Ovary (tissue), 10 donors: ENCODE measurements at regions of chr17 and their contacts with region 1.

Region 1: GRCh38 chr17:59311130-59311920 is 20.1 kb upstream of the YPEL2 start:
- DNase-seq: peak in 1 of 5 donors; percentile 37
- H3K4me3 ChIP-seq: no peak overlapping the region
- H3K27ac ChIP-seq: no peak overlapping the region
- H3K4me1 ChIP-seq: no peaks in the 10 kb centered on the region
- H3K27me3 ChIP-seq: no peaks in the 10 kb centered on the region
- CTCF ChIP-seq: peak; percentile 44 to 83 (median 77)
- EP300 ChIP-seq: no peak
- POLR2A ChIP-seq: no peak

Region 2: GRCh38 chr17:59331129-59331928 is 20.0 kb after region 1 on chr17 and contains the start of gene YPEL2:
- intact Hi-C with region 1: no loop called
- DNase-seq: peak; percentile 95 to 98 (median 97)
- H3K4me3 ChIP-seq: peak within 1 kb of the TSS; percentile 96
- H3K27ac ChIP-seq: peak within 1 kb of the TSS; percentile 75 to 85
- H3K4me1 ChIP-seq: peaks cover 7% of the 10 kb centered on the region
- H3K27me3 ChIP-seq: no peaks in the 10 kb centered on the region
- CTCF ChIP-seq: no peak
- EP300 ChIP-seq: no peak
- POLR2A ChIP-seq: peak; percentile 39
- total RNA-seq, gene YPEL2: 6.6 to 28.1 (median 10.6) TPM

Region 3: DNA sequence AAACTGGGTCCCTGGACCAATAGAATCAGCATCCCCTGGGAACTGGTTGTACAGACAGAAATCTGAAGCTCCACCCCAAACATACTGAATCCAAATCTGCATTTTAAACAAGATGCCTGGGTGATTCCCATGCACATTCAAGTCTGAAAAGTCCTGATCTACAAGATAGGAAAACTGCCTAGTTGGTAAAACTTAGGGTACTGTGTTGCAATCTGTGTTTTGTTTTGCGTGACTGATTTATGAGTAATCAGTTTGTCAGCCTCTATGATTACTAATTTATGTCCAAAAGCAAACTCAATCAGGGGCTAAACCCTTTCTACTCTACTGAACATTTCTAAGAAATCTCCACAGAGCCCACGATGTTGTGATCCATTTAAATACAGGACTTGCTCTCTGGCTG is 123.9 kb after region 1 on chr17:
- intact Hi-C with region 1: loop called in 2 of 4 experiments (anchors 5 kb)
- DNase-seq: no peak
- H3K4me3 ChIP-seq: no peak overlapping the region
- H3K27ac ChIP-seq: no peak overlapping the region
- H3K4me1 ChIP-seq: peaks cover under 1% of the 10 kb centered on the region
- H3K27me3 ChIP-seq: no peaks in the 10 kb centered on the region
- CTCF ChIP-seq: no peak
- EP300 ChIP-seq: no peak
- POLR2A ChIP-seq: no peak

Region 4: DNA sequence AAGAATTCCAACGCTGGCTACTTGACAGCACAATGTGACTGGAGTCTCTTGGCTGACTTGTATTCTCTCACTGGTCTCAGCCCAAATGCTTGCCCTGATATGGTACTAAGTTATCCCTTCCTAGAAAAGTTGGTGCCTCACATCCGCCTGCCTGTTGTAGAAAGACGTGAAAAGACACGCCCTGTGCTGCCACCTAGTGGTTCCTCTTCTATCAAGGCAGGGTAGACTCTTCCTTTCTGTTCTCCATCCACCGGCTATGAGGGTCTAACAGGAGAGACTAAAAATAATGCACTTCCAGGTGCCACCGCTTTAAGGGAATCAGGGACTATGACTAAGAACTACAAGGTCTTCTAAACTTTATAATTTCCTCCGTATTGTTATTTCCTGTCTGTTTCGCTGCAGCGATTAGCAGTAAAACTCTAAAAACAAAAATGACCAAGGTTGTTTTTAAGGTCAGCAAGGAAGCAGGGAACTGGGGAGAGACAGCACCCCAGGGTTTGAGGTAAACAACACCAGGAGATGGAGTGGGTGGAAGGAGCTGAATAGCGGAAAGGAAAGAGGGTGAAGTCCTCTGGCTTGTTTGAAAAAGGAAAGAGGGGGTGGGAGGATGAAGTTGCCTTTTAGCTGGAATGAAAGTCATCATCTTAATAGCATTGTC is 129.6 kb after region 1 on chr17:
- intact Hi-C with region 1: loop called in 2 of 4 experiments (anchors 5 kb)
- DNase-seq: peak; percentile 84 to 94 (median 89)
- H3K4me3 ChIP-seq: no peak overlapping the region
- H3K27ac ChIP-seq: no peak overlapping the region
- H3K4me1 ChIP-seq: peaks cover 3% of the 10 kb centered on the region
- H3K27me3 ChIP-seq: no peaks in the 10 kb centered on the region
- CTCF ChIP-seq: peak; percentile 77 to 83 (median 83)
- EP300 ChIP-seq: no peak
- POLR2A ChIP-seq: no peak

Region 5: DNA sequence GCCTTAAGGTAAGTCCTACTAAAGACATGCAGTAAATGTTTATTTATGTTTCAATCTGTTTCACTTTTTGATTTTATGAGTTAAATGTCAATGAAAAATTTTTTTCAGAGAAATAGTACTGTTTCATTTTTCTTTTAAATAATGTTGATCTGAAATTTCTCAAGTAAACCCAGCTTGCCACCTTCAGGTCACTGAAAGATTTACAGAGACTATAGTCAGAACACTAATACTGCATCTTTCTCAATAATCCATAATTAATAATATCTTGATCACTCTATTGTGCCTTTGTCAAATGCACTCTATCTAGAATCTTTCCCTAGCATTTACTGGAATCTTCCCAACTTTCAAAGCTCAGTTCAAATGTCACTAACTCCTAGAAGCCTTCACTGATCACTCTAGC is 247.7 kb after region 1 on chr17:
- intact Hi-C with region 1: loop called in 2 of 4 experiments (anchors 10 kb)
- DNase-seq: no peak
- H3K4me3 ChIP-seq: no peak overlapping the region
- H3K27ac ChIP-seq: no peak overlapping the region
- H3K4me1 ChIP-seq: no peaks in the 10 kb centered on the region
- H3K27me3 ChIP-seq: no peaks in the 10 kb centered on the region
- CTCF ChIP-seq: no peak
- EP300 ChIP-seq: no peak
- POLR2A ChIP-seq: no peak